ENCODE measurements at regions of chr21 and their contacts with region 1.

Region 1: GRCh38 chr21:14120091-14120734 is 90.5 kb downstream of the LIPI start:
- DNase-seq: peak in 7 of 9 donors; percentile 5 to 53 (median 21)
- ATAC-seq: no peak
- H3K4me3 ChIP-seq: no peak overlapping the region
- H3K4me3 Mint-ChIP-seq: peak overlapping the region in 9 of 10 donors; percentile 14 to 63 (median 48)
- H3K27ac ChIP-seq: no peak overlapping the region
- H3K27ac Mint-ChIP-seq: peak overlapping the region in 8 of 9 donors; percentile 52 to 92 (median 78)
- H3K4me1 ChIP-seq: peaks cover 0 to 4% of the 10 kb centered on the region in 2 donors
- H3K4me1 Mint-ChIP-seq: peaks cover 3 to 25% (median 19%) of the 10 kb centered on the region in 7 donors
- H3K27me3 ChIP-seq: no peaks in the 10 kb centered on the region
- H3K27me3 Mint-ChIP-seq: peaks cover 0 to 5% (median 0%) of the 10 kb centered on the region in 5 donors

Region 2: GRCh38 chr21:14070020-14070893 is 50.0 kb before region 1 on chr21:
- CTCF ChIA-PET with region 1: no interaction called
- POLR2A ChIA-PET with region 1: no interaction called
- intact Hi-C with region 1: no loop called
- DNase-seq: no peak
- ATAC-seq: no peak
- H3K4me3 ChIP-seq: no peak overlapping the region
- H3K4me3 Mint-ChIP-seq: no peak overlapping the region
- H3K27ac ChIP-seq: no peak overlapping the region
- H3K27ac Mint-ChIP-seq: no peak overlapping the region
- H3K4me1 ChIP-seq: no peaks in the 10 kb centered on the region
- H3K4me1 Mint-ChIP-seq: peaks cover 0 to 3% (median 0%) of the 10 kb centered on the region in 7 donors
- H3K27me3 ChIP-seq: no peaks in the 10 kb centered on the region
- H3K27me3 Mint-ChIP-seq: no peaks in the 10 kb centered on the region

Region 3: GRCh38 chr21:14099570-14099969 is 20.6 kb before region 1 on chr21:
- CTCF ChIA-PET with region 1: no interaction called
- POLR2A ChIA-PET with region 1: no interaction called
- intact Hi-C with region 1: loop called in 1 of 2 experiments (anchors 2 kb)
- DNase-seq: no peak
- ATAC-seq: no peak
- H3K4me3 ChIP-seq: no peak overlapping the region
- H3K4me3 Mint-ChIP-seq: no peak overlapping the region
- H3K27ac ChIP-seq: no peak overlapping the region
- H3K27ac Mint-ChIP-seq: no peak overlapping the region
- H3K4me1 ChIP-seq: no peaks in the 10 kb centered on the region
- H3K4me1 Mint-ChIP-seq: no peaks in the 10 kb centered on the region
- H3K27me3 ChIP-seq: no peaks in the 10 kb centered on the region
- H3K27me3 Mint-ChIP-seq: no peaks in the 10 kb centered on the region

Region 4: DNA sequence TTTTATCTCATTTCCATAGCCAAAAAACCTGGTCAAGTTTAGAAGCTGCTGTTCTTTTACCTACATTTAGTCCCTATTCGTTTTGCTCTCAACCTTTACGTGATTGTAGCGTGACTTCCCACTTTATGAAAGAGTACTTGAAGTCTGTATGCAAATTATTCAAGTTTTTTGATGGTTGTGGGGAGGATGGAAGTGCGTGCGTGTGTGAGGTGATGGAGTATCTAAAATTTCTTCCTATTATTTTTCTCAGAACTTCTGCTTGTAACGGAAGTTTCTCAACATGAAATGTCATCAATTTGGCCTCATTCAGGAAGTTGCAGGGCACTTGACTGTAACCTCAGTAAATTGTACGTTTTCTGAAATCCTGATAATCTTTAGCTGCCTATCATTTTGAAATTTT is 362.0 kb after region 1 on chr21:
- CTCF ChIA-PET with region 1: no interaction called
- POLR2A ChIA-PET with region 1: no interaction called
- intact Hi-C with region 1: no loop called
- DNase-seq: peak in 7 of 9 donors; percentile 29 to 66 (median 53)
- ATAC-seq: peak; percentile 89
- H3K4me3 ChIP-seq: peak overlapping the region; percentile 34
- H3K4me3 Mint-ChIP-seq: peak overlapping the region; percentile 1 to 79 (median 68)
- H3K27ac ChIP-seq: peak overlapping the region; percentile 9
- H3K27ac Mint-ChIP-seq: peak overlapping the region; percentile 37 to 90 (median 72)
- H3K4me1 ChIP-seq: peaks cover 0 to 13% of the 10 kb centered on the region in 2 donors
- H3K4me1 Mint-ChIP-seq: peaks cover 8 to 64% (median 16%) of the 10 kb centered on the region in 7 donors
- H3K27me3 ChIP-seq: no peaks in the 10 kb centered on the region
- H3K27me3 Mint-ChIP-seq: no peaks in the 10 kb centered on the region

Region 5: DNA sequence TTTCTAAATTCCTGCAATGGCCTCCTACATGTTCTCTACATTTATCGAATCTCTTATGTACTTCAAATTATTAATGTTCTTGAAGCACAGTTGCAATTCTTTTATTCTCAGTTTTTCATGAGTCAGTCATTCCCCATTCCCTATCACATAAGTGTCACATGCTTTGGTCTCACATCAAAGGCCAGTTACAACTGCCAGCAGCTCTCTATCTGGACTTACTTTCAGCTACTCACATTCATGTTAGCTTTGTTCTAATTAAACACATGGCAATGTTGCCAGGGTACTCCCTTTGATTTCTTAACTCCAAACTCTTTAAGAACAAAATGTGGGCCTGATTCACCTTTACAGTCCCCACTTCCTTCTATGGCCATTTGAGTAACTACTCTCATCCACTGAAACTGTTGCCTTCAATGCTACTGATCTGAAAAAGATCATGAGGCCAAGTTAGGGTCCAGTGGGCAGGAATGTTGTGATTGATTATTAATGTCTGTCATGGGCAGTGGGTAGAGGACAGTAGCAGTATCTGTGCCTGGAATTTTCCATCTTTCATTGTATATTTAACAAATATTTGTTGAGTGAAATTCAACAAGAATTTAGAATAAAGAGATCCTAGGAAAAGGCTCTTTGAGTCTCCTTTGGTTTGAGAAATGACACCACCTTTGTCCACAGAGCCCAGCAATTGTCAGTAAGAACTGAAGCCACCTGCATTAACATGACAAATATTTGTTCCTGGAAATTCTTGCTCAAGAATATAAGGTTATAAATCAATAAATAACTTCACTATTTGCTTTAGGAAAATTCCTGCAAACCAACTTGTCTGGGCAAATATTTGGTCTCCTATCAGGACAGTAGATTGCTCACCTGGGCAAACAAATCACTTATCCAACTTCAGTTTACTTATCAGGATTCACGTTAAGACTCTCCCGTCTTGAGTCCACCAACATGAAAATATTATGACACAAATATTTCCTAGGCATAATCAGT is 579.5 kb after region 1 on chr21:
- CTCF ChIA-PET with region 1: no interaction called
- POLR2A ChIA-PET with region 1: no interaction called
- intact Hi-C with region 1: no loop called
- DNase-seq: no peak
- ATAC-seq: no peak
- H3K4me3 ChIP-seq: no peak overlapping the region
- H3K4me3 Mint-ChIP-seq: no peak overlapping the region
- H3K27ac ChIP-seq: no peak overlapping the region
- H3K27ac Mint-ChIP-seq: no peak overlapping the region
- H3K4me1 ChIP-seq: no peaks in the 10 kb centered on the region
- H3K4me1 Mint-ChIP-seq: peaks cover 0 to 2% (median 0%) of the 10 kb centered on the region in 7 donors
- H3K27me3 ChIP-seq: no peaks in the 10 kb centered on the region
- H3K27me3 Mint-ChIP-seq: no peaks in the 10 kb centered on the region